Panc1 (cell line): ENCODE measurements at regions of chr11 and their contacts with region 1.

Region 1: DNA sequence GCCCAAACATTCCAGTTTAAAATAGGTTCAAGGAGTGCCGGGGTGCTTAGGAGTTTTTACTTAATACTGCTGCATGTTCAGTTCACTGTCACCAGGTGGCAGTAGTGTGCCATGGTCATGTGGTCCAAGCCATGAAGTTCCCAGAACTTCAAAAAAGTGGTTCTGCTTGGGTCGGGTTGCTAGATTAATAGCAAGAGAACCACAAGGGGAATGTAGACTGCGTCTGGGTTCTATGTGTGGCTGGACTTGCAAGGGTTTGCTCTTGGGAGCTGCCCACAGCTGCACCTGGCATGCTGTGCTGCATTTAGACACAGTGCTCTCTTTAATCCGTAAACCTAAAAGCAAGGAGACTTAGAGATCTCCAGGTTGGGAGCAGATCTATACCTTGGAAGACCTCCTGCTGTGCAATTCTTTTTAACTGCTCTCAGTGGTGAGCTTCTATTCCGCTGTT is 6.5 kb upstream of the SPON1 start:
- DNase-seq: no peak
- ATAC-seq: peak; percentile 79
- H3K4me3 ChIP-seq: no peak overlapping the region
- H3K27ac ChIP-seq: no peak overlapping the region
- H3K4me1 ChIP-seq: no peaks in the 10 kb centered on the region
- H3K27me3 ChIP-seq: peaks cover 55% of the 10 kb centered on the region
- CTCF ChIP-seq: peak; percentile 88

Region 2: DNA sequence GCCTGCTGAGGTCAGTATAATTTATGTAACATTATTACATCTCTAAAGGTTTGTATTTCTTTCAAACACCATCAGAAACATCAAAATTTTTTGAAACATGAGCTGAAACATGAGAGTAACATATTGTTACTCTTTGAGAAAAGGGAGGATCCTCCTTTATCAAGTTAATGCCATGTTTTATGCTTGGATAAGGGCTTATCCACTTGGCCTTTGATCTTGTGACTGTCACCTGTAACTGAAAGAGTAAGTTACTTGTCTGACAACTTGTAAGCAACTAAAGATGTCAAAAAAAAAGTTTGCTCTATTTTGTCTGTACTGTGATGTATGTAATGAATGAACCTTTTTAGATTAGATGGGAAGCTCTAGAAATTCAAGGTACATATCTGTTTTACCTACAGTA is 227.9 kb before region 1 on chr11:
- CTCF ChIA-PET with region 1: no interaction called
- POLR2A ChIA-PET with region 1: no interaction called
- in situ Hi-C with region 1: no loop called
- intact Hi-C with region 1: no loop called
- DNase-seq: no peak
- ATAC-seq: no peak
- H3K4me3 ChIP-seq: no peak overlapping the region
- H3K27ac ChIP-seq: no peak overlapping the region
- H3K4me1 ChIP-seq: no peaks in the 10 kb centered on the region
- H3K27me3 ChIP-seq: no peaks in the 10 kb centered on the region
- CTCF ChIP-seq: no peak

Region 3: GRCh38 chr11:13772223-13773046 is 183.6 kb before region 1 on chr11:
- CTCF ChIA-PET with region 1: no interaction called
- POLR2A ChIA-PET with region 1: no interaction called
- in situ Hi-C with region 1: no loop called
- intact Hi-C with region 1: loop called (anchors 10 kb)
- DNase-seq: peak; percentile 43
- ATAC-seq: peak; percentile 74; the same call in 1 of the 2 replicates
- H3K4me3 ChIP-seq: no peak overlapping the region
- H3K27ac ChIP-seq: no peak overlapping the region
- H3K4me1 ChIP-seq: no peaks in the 10 kb centered on the region
- H3K27me3 ChIP-seq: 0 out of 2 replicates have a peak, but pooled peaks cover 4% of the 10 kb centered on the region
- CTCF ChIP-seq: peak; percentile 63

Region 4: GRCh38 chr11:13993096-13993765 is 37.2 kb after region 1 on chr11:
- CTCF ChIA-PET with region 1: no interaction called
- POLR2A ChIA-PET with region 1: no interaction called
- in situ Hi-C with region 1: no loop called
- intact Hi-C with region 1: no loop called
- DNase-seq: no peak
- ATAC-seq: no peak
- H3K4me3 ChIP-seq: no peak overlapping the region
- H3K27ac ChIP-seq: no peak overlapping the region
- H3K4me1 ChIP-seq: no peaks in the 10 kb centered on the region
- H3K27me3 ChIP-seq: no peaks in the 10 kb centered on the region; the same call in none of the 2 replicates
- CTCF ChIP-seq: no peak

Region 5: DNA sequence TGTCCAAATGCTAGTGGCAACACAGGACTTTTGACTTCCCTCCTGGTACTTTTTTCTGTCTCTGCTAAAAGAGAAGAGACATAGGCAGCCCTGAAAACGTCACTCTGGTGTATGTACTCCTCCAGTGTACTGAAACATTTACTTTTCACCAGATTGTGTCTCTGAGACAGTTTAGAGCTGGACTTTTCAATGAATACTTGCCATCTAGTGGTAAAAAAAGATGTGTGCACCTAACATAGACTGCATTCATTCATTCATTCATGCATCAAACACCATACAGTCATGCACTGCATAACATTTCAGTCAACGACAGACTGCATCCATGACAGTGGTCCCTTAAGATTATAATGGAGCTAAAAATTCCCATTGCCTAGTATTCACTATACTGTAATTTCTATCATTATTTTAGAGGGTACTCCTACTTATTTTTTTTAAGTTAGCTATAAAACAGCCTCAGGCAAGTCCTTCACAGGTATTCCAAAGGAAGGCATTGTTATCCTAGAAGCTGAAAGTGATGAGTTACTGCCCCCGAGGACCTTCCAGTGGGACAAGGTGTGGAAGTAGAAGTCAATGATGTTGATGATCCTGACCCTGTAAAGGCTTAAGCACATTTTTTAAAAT is 192.8 kb after region 1 on chr11:
- CTCF ChIA-PET with region 1: no interaction called
- POLR2A ChIA-PET with region 1: no interaction called
- in situ Hi-C with region 1: no loop called
- intact Hi-C with region 1: loop called (anchors 2 kb)
- DNase-seq: peak; percentile 17
- ATAC-seq: peak; percentile 94
- H3K4me3 ChIP-seq: no peak overlapping the region
- H3K27ac ChIP-seq: no peak overlapping the region
- H3K4me1 ChIP-seq: no peaks in the 10 kb centered on the region
- H3K27me3 ChIP-seq: no peaks in the 10 kb centered on the region
- CTCF ChIP-seq: peak; percentile 60; the same call in 1 of the 2 replicates